Activated CD4-positive, alpha-beta T cell treated with anti-CD3 and anti-CD28 coated beads, Interleukin-2, amount 10 ng/mL, durations not matched to agents 24 days and 14 days (primary cell): ENCODE measurements at regions of chr3 and their contacts with region 1.

Region 1: GRCh38 chr3:111577794-111578685 is 17.1 kb downstream of the ZBED2 start:
- DNase-seq: peak; percentile 77
- H3K4me3 Mint-ChIP-seq: peak overlapping the region; percentile 9
- H3K27ac Mint-ChIP-seq: peak overlapping the region; percentile 77
- H3K4me1 Mint-ChIP-seq: peaks cover 68% of the 10 kb centered on the region
- H3K27me3 Mint-ChIP-seq: no peaks in the 10 kb centered on the region

Region 2: DNA sequence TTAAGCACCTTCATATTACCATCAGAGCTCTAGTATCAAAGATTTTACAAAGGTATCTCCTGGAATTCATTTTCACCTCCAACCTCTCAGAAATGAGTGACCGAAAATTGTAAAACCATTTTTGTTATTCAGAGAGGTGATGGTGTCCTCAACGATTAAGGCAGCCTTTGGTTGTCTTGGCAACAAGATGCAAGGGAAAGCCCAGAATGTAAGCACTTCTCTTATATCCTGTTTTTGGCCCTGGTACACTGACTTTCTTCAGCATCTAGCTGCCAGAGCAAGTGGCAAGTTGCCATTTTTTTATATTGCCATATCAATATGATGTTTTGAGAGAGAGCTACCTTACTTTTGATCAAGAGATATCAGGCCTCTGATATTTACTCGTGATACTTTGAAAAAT is 891.3 kb before region 1 on chr3:
- intact Hi-C with region 1: no loop called
- DNase-seq: no peak
- H3K4me3 Mint-ChIP-seq: no peak overlapping the region
- H3K27ac Mint-ChIP-seq: no peak overlapping the region
- H3K4me1 Mint-ChIP-seq: no peaks in the 10 kb centered on the region
- H3K27me3 Mint-ChIP-seq: peaks cover 2% of the 10 kb centered on the region

Region 3: DNA sequence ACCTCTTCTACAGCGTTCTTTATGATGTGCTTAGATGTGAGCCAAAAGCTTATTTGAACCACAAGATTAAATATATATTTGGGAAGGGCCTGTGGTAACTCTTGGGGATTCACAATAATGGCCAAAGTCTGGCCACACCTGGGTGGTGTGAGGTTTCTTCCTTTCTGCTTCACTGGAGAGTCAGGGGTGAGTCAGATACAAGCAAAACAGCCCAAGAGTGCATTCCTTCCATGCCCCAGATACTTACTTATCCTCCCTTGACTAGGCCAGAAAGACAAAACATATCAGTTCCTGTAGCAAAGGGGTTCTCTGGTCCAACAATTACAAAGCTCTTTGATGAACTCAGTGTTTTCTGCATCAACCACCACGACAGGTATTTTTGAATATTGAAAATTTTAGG is 16.2 kb after region 1 on chr3:
- intact Hi-C with region 1: loop called (anchors 1 kb)
- DNase-seq: peak; percentile 67
- H3K4me3 Mint-ChIP-seq: peak overlapping the region; percentile 96
- H3K27ac Mint-ChIP-seq: peak overlapping the region; percentile 96
- H3K4me1 Mint-ChIP-seq: peaks cover 57% of the 10 kb centered on the region
- H3K27me3 Mint-ChIP-seq: no peaks in the 10 kb centered on the region

Region 4: DNA sequence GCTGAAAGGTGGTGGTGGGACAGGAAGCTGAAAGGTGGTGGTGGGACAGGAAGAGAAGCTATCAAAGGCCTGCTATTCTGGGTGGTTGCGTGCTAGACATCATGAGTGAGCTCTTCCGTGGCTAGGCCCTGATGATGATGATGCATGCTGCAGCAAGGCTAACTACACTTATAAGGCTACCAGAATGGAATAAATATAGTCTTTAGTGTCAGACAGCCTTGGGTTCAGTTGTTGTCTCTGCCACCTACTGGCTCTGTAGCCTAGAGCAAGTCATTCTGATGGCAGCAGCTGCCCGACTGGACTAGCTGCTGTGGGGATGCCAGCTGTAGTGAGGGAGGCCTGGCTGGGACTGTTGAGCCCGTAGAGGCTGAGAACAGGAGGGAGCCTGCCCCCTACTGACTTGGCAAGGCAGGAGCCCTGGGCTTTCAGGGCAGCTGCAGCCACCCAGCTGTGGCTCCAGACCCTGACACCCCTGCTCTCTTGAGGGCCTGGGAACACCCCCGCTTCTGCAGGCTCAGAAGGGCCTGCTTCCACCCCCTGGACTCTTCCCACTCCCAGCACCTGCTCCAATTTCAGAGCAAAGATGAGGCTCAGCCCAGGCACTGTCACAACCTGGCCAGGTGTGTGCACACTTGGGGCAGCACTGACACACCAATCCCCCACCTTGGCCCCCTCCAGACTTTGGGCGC is 38.5 kb after region 1 on chr3:
- intact Hi-C with region 1: loop called (anchors 1 kb)
- DNase-seq: peak; percentile 88
- H3K4me3 Mint-ChIP-seq: peak overlapping the region; percentile 59
- H3K27ac Mint-ChIP-seq: peak overlapping the region; percentile 92
- H3K4me1 Mint-ChIP-seq: peaks cover 71% of the 10 kb centered on the region
- H3K27me3 Mint-ChIP-seq: no peaks in the 10 kb centered on the region

Region 5: DNA sequence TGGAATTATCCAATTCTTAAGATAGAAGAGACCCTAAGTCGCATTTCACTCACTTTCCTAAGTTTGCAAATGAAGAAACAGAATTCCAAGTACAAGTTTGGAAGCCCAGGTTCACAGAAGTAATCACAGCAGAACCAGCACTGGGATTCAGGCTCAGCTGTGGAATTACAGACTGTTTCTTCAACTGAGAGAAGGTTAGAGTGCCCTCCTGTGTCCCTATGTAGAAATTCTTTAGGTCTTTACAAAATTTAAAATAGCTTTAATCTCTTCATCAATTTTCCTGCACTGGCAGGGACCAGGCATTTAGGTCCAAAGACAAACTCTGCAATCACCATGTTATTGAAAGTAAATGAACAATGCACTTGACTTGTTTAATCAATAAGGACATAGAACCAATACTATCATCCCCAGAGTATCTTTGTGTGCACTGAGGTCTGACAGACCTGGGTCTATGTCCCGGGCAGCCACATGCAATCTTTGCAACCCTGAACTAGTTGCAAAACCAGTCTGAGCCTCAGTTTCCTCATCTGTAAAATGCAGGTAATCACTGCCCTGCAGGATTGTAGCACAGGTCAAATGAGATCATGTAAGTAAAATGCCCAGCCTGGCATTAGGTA is 113.4 kb after region 1 on chr3:
- intact Hi-C with region 1: loop called (anchors 5 kb)
- DNase-seq: no peak
- H3K4me3 Mint-ChIP-seq: no peak overlapping the region
- H3K27ac Mint-ChIP-seq: no peak overlapping the region
- H3K4me1 Mint-ChIP-seq: peaks cover 48% of the 10 kb centered on the region
- H3K27me3 Mint-ChIP-seq: no peaks in the 10 kb centered on the region

Region 6: DNA sequence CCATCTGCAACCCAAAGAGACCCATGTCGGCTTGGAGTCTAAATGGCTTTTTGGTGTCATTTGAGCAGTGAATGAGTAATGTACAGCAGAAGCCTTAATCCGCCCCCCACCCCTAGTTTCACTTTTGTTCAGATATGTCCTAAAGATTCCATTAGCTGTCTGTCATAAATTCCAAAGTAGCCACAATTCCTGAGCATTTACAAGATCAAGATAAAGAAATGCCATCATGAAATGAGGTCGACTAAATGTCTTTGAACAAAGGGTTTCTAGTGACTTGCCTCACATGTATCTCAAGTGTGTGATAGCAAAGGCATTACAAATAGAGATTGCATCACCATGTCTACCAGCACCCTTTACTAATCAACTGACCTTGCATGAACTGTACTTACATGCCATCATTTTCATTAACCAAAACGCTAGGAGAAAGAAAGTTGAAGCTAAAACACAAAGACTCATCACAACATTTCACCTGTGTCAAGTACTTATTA is 157.3 kb after region 1 on chr3:
- intact Hi-C with region 1: no loop called
- DNase-seq: no peak
- H3K4me3 Mint-ChIP-seq: no peak overlapping the region
- H3K27ac Mint-ChIP-seq: peak overlapping the region; percentile 48
- H3K4me1 Mint-ChIP-seq: peaks cover 25% of the 10 kb centered on the region
- H3K27me3 Mint-ChIP-seq: no peaks in the 10 kb centered on the region